Right lobe of liver (tissue), 6 donors: ENCODE measurements at regions of chrX and their contacts with region 1.

Region 1: DNA sequence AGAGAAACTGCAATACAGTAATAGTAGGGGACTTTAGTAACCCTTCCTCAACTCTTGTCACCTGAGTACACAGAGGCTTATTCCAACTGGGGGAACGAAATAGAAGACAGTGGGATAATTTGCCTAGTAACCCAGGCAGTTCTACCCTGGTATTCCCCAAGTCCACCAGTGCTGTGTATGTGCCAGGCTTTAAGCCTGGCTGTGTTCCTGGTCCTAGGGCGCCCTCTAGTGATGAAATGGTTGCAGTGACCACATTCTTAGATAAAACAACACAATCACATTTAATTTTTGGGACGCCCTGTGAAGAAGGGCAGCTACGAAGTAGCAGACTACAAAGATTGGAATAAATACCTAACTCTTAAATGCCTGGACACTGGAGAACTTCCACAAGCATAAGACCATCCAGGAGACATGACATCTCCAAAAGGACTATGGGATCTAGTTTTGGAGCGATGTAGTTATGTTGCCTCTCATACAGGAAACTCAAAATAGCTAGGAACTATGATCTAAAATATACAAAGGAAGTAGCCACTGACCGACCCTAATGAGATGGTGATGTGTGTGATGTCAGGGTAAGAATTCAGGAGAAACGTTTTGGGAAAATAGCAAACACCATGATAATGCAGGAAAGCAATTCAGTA is 288.5 kb upstream of the ZCCHC13 start:
- DNase-seq: peak in 2 of 3 donors; percentile 58 to 59
- ATAC-seq: peak; percentile 92 to 98 (median 98)
- H3K4me3 ChIP-seq: no peak overlapping the region
- H3K27ac ChIP-seq: no peak overlapping the region
- H3K4me1 ChIP-seq: no peaks in the 10 kb centered on the region
- H3K27me3 ChIP-seq: no peaks in the 10 kb centered on the region
- CTCF ChIP-seq: peak; percentile 87 to 94 (median 92)
- POLR2A ChIP-seq: no peak

Region 2: DNA sequence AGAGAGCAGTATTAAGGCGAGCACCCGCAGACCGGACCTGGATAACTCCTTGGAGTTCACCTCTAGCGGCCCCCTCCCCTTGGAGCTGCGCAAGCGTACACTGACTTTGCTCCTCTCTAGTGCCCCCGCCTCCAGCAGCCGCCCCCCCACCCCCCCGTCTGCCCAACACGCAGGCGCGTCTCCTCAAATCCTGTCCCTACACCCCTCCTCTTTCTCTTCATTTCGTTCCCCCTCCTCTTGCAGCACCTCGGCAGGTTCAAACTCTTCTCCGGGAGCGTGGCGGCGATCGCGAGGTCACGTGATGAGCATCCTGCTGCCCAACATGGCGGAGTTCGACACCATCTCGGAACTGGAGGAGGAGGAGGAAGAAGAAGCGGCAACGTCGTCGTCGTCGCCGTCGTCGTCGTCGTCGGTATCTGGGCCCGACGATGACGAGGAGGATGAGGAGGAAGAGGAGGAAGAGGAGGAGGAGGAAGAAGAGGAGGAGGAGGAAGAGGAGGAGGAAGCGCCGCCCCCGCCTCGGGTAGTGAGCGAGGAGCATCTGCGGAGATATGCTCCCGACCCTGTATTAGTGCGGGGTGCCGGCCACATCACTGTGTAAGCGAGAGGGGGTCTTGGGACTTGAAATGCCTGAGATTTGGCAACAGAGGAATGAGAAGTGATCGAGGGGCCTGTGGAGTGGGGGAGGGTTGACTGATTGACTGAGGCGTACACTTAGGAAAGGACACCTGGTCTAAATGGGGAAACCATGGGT is 452.3 kb before region 1 on chrX and contains the start of gene CHIC1:
- intact Hi-C with region 1: no loop called
- DNase-seq: peak; percentile 38 to 70 (median 46)
- ATAC-seq: peak; percentile 63 to 80 (median 72)
- H3K4me3 ChIP-seq: peak within 1 kb of the TSS; percentile 35 to 57 (median 38)
- H3K27ac ChIP-seq: peak within 1 kb of the TSS in 1 of 3 donors; percentile 2
- H3K4me1 ChIP-seq: no peaks in the 10 kb centered on the region
- H3K27me3 ChIP-seq: no peaks in the 10 kb centered on the region
- CTCF ChIP-seq: no peak
- POLR2A ChIP-seq: no peak
- total RNA-seq, gene CHIC1: 0.68 to 4.3 (median 0.93) TPM

Region 3: DNA sequence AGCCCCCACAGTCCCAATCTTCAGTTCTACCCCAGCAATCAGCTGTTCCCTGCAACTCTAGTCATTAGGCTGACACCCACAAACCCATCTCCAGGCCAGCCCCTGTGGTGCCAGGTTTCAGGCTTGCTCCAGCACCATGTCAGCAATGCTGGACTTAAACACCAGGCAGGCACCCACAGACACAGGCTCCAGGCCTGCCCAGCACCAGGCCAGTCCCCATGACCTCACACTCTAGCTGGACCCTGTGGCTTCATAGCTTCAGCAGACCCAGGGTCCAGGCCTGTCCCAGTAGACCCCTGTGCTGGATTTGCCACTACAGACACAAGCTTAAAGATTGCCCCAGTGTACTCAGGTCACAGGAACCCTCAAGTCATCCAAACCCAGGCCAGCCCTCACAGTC is 152.2 kb before region 1 on chrX:
- intact Hi-C with region 1: loop called in 1 of 2 experiments (anchors 10 kb)
- DNase-seq: no peak
- ATAC-seq: no peak
- H3K4me3 ChIP-seq: no peak overlapping the region
- H3K27ac ChIP-seq: no peak overlapping the region
- H3K4me1 ChIP-seq: no peaks in the 10 kb centered on the region
- H3K27me3 ChIP-seq: no peaks in the 10 kb centered on the region
- CTCF ChIP-seq: no peak
- POLR2A ChIP-seq: no peak

Region 4: GRCh38 chrX:74138943-74139342 is 123.4 kb after region 1 on chrX:
- intact Hi-C with region 1: no loop called
- DNase-seq: no peak
- ATAC-seq: no peak
- H3K4me3 ChIP-seq: no peak overlapping the region
- H3K27ac ChIP-seq: no peak overlapping the region
- H3K4me1 ChIP-seq: no peaks in the 10 kb centered on the region
- H3K27me3 ChIP-seq: peaks cover 0 to 5% of the 10 kb centered on the region in 2 donors
- CTCF ChIP-seq: no peak
- POLR2A ChIP-seq: no peak